Endothelial cell of umbilical vein (primary cell): ENCODE measurements at regions of chr4 and their contacts with region 1.

Region 1: GRCh38 chr4:106502106-106502699 is 133.6 kb upstream of the GIMD1 start:
- DNase-seq: peak; percentile 66
- H3K4me3 ChIP-seq: no peak overlapping the region
- H3K27ac ChIP-seq: no peak overlapping the region
- H3K4me1 ChIP-seq: no peaks in the 10 kb centered on the region
- H3K27me3 ChIP-seq: no peaks in the 10 kb centered on the region
- CTCF ChIP-seq: peak; percentile 69 to 72
- POLR2A ChIP-seq: no peak

Region 2: GRCh38 chr4:105838082-105838481 is 664.1 kb before region 1 on chr4:
- CTCF ChIA-PET with region 1: no interaction called
- POLR2A ChIA-PET with region 1: no interaction called
- dilution Hi-C with region 1: no loop called
- intact Hi-C with region 1: no loop called
- DNase-seq: no peak
- H3K4me3 ChIP-seq: no peak overlapping the region
- H3K27ac ChIP-seq: no peak overlapping the region
- H3K4me1 ChIP-seq: no peaks in the 10 kb centered on the region
- H3K27me3 ChIP-seq: no peaks in the 10 kb centered on the region
- CTCF ChIP-seq: no peak
- POLR2A ChIP-seq: no peak

Region 3: DNA sequence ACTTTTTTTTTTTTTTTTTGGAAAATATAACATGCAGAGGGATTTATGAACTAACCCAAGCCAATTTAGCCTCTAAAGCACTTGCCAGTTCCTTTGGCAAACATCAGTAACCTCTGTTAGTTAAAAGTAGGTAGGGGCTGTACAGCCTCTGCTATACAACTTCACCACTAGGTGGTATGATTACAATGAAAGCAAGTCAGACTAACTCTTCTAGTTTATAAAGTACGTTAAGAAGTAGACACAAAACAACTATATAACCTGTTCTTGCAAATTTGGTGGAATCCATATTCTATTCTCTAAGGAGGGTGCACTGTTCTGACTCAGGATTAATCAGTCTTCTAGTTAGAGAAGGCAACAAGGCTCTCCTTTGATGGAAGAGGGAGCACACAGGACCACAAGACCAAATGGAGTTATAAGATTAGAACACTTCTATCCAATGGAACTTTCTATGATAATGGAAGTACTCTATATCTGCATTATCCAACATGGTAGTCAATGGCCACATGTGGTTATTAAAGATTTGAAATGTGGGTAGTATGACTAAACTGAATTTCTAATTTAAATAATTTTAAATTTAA is 173.1 kb before region 1 on chr4:
- CTCF ChIA-PET with region 1: interaction called, 12 read pairs
- POLR2A ChIA-PET with region 1: no interaction called
- dilution Hi-C with region 1: no loop called
- intact Hi-C with region 1: loop called (anchors 1 kb)
- DNase-seq: peak; percentile 69
- H3K4me3 ChIP-seq: no peak overlapping the region
- H3K27ac ChIP-seq: no peak overlapping the region
- H3K4me1 ChIP-seq: peaks cover 9% of the 10 kb centered on the region
- H3K27me3 ChIP-seq: no peaks in the 10 kb centered on the region
- CTCF ChIP-seq: peak; percentile 39 to 64
- POLR2A ChIP-seq: no peak

Region 4: DNA sequence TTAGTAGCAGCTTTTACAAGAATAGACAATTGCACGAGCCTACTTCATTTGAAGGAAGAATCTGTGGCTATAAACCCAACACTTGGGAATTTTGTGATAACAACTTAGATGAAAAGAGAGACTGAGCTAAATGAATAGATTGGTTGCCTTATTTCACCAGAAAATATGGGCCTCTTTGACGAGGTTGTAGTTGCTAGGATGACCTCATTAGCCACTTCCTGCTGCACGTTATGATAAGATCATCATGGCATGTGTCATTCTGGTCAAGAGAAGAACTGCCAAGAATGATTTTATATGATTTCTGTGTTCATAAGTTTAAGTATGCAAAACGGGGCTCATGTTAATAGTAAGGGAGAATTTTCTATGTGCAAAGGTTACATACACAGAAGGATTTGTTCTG is 188.3 kb after region 1 on chr4:
- CTCF ChIA-PET with region 1: interaction called, 3 read pairs
- POLR2A ChIA-PET with region 1: no interaction called
- dilution Hi-C with region 1: no loop called
- intact Hi-C with region 1: loop called (anchors 5 kb)
- DNase-seq: peak; percentile 86
- H3K4me3 ChIP-seq: no peak overlapping the region
- H3K27ac ChIP-seq: peak overlapping the region; percentile 79
- H3K4me1 ChIP-seq: peaks cover 18% of the 10 kb centered on the region
- H3K27me3 ChIP-seq: no peaks in the 10 kb centered on the region
- CTCF ChIP-seq: no peak
- POLR2A ChIP-seq: no peak

Region 5: GRCh38 chr4:106818764-106819163 is 316.6 kb after region 1 on chr4:
- CTCF ChIA-PET with region 1: interaction called, 10 read pairs
- POLR2A ChIA-PET with region 1: no interaction called
- dilution Hi-C with region 1: no loop called
- intact Hi-C with region 1: no loop called
- DNase-seq: no peak
- H3K4me3 ChIP-seq: no peak overlapping the region
- H3K27ac ChIP-seq: no peak overlapping the region
- H3K4me1 ChIP-seq: no peaks in the 10 kb centered on the region
- H3K27me3 ChIP-seq: no peaks in the 10 kb centered on the region
- CTCF ChIP-seq: no peak
- POLR2A ChIP-seq: no peak

Region 6: DNA sequence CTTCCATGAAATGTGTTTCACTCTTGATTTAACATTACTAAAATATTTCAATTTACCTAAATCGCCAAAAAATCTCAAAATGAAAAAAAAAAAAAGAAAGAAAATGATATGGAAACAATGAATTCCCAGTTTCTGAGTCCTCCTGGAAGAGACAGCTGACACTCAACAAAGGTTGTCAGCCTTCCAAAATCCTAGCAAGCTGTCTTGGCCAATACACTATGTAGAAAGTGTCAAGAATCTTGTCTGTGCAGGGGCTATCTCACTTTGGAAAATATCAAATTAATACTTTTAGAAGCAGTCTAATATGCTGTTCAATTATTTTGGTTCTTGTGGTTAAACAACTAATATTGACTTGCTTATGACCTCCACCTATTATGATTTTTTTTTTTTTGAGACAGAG is 525.2 kb after region 1 on chr4:
- CTCF ChIA-PET with region 1: no interaction called
- POLR2A ChIA-PET with region 1: no interaction called
- dilution Hi-C with region 1: no loop called
- intact Hi-C with region 1: no loop called
- DNase-seq: no peak
- H3K4me3 ChIP-seq: no peak overlapping the region
- H3K27ac ChIP-seq: no peak overlapping the region
- H3K4me1 ChIP-seq: no peaks in the 10 kb centered on the region
- H3K27me3 ChIP-seq: no peaks in the 10 kb centered on the region
- CTCF ChIP-seq: no peak
- POLR2A ChIP-seq: no peak